K562 (cell line): ENCODE measurements at regions of chr9 and their contacts with region 1.

Region 1: GRCh38 chr9:128438343-128439109 is 17.3 kb upstream of the ODF2 start:
- DNase-seq: peak; percentile 86 to 92 (median 88)
- ATAC-seq: peak; percentile 97
- H3K4me3 ChIP-seq: no peak overlapping the region
- H3K27ac ChIP-seq: no peak overlapping the region
- H3K4me1 ChIP-seq: peaks cover 3 to 25% of the 10 kb centered on the region in 2 experiments; a peak in 4 of 5 replicates
- H3K27me3 ChIP-seq: no peaks in the 10 kb centered on the region
- CTCF ChIP-seq: peak; percentile 88 to 92 (median 90)
- EP300 ChIP-seq: no peak
- POLR2A ChIP-seq: no peak
- RAD21 ChIP-seq: peak; percentile 72 to 87

Region 2: DNA sequence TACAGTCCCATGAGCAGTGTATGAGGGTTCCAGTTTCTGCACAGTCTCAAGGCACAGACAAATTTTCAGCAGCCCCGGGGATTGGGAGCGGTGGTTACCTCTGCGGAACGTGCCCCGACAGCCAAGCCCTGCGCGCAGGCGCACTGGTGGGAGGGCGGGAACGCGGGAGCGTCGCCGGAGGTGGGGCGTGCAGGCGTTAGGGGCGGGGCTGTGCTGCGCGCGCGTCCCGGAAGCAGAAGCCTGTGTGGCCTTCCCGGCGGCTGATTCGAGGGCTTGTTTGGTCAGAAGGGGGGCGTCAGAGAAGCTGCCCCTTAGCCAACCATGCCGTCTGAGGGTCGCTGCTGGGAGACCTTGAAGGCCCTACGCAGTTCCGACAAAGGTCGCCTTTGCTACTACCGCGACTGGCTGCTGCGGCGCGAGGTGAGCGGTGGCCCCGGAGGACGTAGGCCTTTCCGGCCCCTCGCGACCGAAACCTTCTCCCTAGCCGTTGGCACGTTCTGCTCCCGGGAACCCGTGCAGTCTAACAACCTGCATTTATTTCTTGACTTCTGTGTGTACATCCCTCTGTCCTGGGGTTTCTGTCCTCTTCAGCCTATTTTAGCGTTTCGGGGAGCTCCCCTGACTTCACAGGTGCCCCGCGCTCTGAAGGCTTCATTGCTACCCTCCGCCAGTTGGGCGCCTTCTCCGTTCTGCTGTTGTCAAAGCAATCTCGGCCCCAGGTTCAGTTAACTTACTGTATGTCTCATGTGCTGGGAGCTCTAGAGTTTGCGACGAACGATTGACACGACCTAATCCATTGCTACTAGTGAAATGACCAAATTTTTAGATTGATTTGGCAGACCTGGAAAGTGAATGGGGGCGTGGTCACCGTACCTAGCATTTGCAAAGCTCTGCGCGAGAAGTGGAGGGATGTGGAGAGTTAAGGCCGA is 66.2 kb after region 1 on chr9 and contains the start of gene GLE1:
- CTCF ChIA-PET with region 1: no interaction called
- POLR2A ChIA-PET with region 1: no interaction called
- in situ Hi-C with region 1: no loop called
- intact Hi-C with region 1: loop called (anchors 2 kb)
- DNase-seq: peak; percentile 97 to 100 (median 98)
- ATAC-seq: peak; percentile 97
- H3K4me3 ChIP-seq: peak within 1 kb of the TSS; percentile 69
- H3K27ac ChIP-seq: peak within 1 kb of the TSS; percentile 86
- H3K4me1 ChIP-seq: peaks cover 6 to 11% of the 10 kb centered on the region in 2 experiments; a peak in 4 of 5 replicates
- H3K27me3 ChIP-seq: no peaks in the 10 kb centered on the region
- CTCF ChIP-seq: peak in 1 of 3 experiments; percentile 24; a peak in 1 of 6 replicates
- EP300 ChIP-seq: no peak
- POLR2A ChIP-seq: peak; percentile 90
- RAD21 ChIP-seq: no peak
- polyA plus RNA-seq, gene GLE1: 15.9 to 19.8 TPM

Region 3: DNA sequence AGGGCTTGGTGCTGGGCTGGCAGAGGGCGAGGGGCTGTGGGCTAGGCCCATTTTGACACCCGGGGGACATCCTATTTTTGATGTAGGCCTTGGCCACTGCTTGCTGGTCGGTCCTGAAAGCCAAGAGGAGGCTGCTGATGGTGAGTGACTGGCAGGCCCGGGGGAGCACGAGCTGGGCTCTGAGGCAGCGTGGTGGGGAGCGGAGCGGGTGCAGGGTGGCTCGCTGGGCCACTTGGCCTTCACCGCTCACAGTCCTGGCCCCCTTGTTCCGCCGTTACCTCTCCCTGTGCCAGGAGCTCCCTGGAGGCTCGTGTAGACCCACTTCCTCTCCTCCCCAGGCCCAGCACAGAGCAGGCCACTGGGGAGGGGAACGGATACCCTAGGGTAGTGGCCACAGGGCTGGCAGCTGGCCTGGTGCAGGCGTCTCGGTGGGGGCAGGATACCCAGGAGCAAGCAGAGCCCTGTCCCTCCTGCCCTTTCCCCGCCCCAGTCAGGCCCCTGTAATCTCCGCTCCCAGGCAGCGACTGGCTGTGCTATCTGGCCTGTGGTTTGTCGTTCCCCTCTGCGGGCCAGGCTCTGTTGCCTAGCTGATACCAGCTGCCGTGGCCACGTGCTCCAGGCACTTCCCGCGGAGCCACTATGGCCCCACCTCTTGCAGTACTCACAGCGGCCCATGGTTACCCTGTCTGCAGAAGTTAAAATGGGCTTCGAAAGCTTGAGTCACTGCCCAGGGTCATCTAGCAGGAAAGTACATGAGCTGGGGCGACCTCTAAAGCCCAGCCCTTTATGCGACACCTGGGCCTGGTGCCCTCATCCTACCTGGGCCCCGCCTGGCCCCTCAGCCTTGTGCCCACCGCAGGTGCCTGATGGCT is 630.7 kb after region 1 on chr9:
- CTCF ChIA-PET with region 1: no interaction called
- POLR2A ChIA-PET with region 1: no interaction called
- in situ Hi-C with region 1: no loop called
- intact Hi-C with region 1: no loop called
- DNase-seq: peak; percentile 83 to 98 (median 90)
- ATAC-seq: peak; percentile 98
- H3K4me3 ChIP-seq: no peak overlapping the region
- H3K27ac ChIP-seq: peak overlapping the region; percentile 92
- H3K4me1 ChIP-seq: peaks cover 44 to 54% of the 10 kb centered on the region in 2 experiments
- H3K27me3 ChIP-seq: no peaks in the 10 kb centered on the region
- CTCF ChIP-seq: peak; percentile 26 to 47 (median 36); a peak in 4 of 6 replicates
- EP300 ChIP-seq: peak; percentile 97
- POLR2A ChIP-seq: no peak
- RAD21 ChIP-seq: peak in 1 of 2 experiments; percentile 18; a peak in 1 of 4 replicates